Endothelial cell of umbilical vein (primary cell): ENCODE measurements at regions of chr3 and their contacts with region 1.

Region 1: GRCh38 chr3:32467333-32468070 is 35.1 kb downstream of the CMTM6 start:
- DNase-seq: peak; percentile 89
- H3K4me3 ChIP-seq: peak overlapping the region in 1 of 3 experiments; percentile 6
- H3K27ac ChIP-seq: no peak overlapping the region
- H3K4me1 ChIP-seq: peaks cover 37% of the 10 kb centered on the region
- H3K27me3 ChIP-seq: no peaks in the 10 kb centered on the region
- CTCF ChIP-seq: peak; percentile 98 to 99
- POLR2A ChIP-seq: no peak

Region 2: GRCh38 chr3:32177702-32178198 is 289.8 kb before region 1 on chr3:
- CTCF ChIA-PET with region 1: interaction called, 33 read pairs
- POLR2A ChIA-PET with region 1: no interaction called
- dilution Hi-C with region 1: no loop called
- intact Hi-C with region 1: loop called (anchors 1 kb)
- DNase-seq: peak; percentile 91
- H3K4me3 ChIP-seq: no peak overlapping the region
- H3K27ac ChIP-seq: no peak overlapping the region
- H3K4me1 ChIP-seq: peaks cover 6% of the 10 kb centered on the region
- H3K27me3 ChIP-seq: no peaks in the 10 kb centered on the region
- CTCF ChIP-seq: peak; percentile 92 to 95
- POLR2A ChIP-seq: no peak

Region 3: DNA sequence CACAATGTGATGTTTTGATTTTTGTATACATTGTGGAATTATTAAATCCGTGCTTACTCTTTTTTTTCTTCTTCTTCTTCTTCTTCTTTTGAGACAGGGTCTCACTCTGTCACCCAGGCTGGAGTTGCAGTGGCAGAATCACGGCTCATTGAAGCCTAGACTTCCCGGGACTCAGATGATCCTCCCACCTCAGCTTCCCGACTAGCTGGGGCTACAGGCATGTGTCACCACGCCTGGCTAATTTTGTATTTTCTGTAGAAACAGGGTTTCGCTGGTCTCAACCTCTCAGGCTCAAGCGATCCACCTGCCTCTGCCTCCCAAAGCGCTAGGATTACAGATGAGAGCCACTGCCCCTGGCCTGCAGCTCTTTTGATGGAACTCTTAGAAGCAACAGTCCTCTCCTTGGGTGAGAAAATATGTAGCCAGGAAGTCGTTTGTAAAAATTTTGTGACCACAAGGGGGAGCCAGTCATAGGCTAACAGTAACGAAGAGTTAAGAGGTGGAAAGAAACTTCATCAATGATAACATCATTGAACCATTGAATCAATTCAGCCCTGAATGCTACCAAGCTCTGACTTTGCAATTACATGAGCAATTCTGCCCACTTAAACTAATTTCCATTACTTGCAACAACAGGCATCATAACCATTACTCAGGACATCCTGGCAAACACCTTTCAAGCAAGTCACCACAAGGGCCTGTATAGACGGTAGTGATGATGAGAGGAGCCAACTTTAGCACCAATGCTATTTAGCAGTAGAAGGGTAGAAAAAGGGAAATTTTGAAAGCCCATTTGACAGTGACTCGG is 92.5 kb before region 1 on chr3:
- CTCF ChIA-PET with region 1: interaction called, 143 read pairs
- POLR2A ChIA-PET with region 1: no interaction called
- dilution Hi-C with region 1: no loop called
- intact Hi-C with region 1: loop called (anchors 1 kb)
- DNase-seq: peak; percentile 80
- H3K4me3 ChIP-seq: no peak overlapping the region
- H3K27ac ChIP-seq: no peak overlapping the region
- H3K4me1 ChIP-seq: peaks cover 9% of the 10 kb centered on the region
- H3K27me3 ChIP-seq: no peaks in the 10 kb centered on the region
- CTCF ChIP-seq: peak; percentile 41 to 48
- POLR2A ChIP-seq: no peak

Region 4: GRCh38 chr3:32401556-32402081 is 65.9 kb before region 1 on chr3:
- CTCF ChIA-PET with region 1: interaction called, 41 read pairs
- POLR2A ChIA-PET with region 1: no interaction called
- dilution Hi-C with region 1: no loop called
- intact Hi-C with region 1: loop called (anchors 1 kb)
- DNase-seq: peak; percentile 96
- H3K4me3 ChIP-seq: peak overlapping the region in 2 of 3 experiments; percentile 9 to 47
- H3K27ac ChIP-seq: peak overlapping the region; percentile 89
- H3K4me1 ChIP-seq: peaks cover 34% of the 10 kb centered on the region
- H3K27me3 ChIP-seq: no peaks in the 10 kb centered on the region
- CTCF ChIP-seq: no peak
- POLR2A ChIP-seq: peak; percentile 64

Region 5: DNA sequence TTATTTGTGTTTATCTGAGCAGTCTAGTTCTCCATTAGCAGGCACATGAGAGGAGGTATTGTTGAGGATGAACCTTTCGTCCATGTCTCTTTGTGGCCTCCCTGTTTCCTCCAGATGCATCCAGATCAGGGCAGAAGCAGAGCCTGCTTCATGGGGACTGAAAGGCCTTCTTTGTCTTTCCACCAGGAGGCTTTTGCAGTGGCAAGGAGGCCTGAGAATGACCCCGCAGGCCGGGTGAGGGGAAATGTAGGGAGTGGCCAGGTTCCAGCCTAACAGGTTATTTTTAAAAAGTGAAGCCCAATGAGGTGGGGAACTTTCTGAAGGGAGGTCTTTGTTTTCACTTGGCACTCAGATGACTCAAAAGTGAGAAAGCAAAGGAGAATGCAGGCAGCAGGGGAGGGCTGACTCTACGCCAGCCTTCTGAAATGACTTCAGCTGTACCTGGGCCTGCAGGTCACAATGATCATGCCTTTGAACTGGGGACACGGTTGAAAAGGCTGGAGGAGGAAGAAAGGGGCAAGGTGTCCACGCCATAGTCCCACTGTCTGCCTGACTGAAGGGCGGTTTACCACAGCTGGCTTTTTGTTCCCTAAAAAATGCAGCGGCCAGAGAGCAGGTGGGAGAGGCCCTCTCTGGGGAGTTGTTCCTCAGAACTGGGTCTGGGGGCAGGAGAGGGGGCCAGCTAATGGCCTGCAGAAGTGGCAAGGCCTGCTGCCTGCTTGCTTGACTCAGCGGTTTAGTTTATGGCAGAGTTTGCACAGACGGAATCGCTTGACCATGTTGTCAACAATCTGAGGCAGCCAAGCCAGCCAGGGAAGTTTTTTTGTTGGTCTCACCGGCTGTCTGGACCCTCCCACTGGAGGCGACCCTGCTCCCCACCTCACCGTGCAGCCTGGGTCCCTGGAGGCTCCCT is 47.1 kb before region 1 on chr3:
- CTCF ChIA-PET with region 1: interaction called, 56 read pairs
- POLR2A ChIA-PET with region 1: no interaction called
- dilution Hi-C with region 1: no loop called
- intact Hi-C with region 1: loop called (anchors 1 kb)
- DNase-seq: peak; percentile 85
- H3K4me3 ChIP-seq: no peak overlapping the region
- H3K27ac ChIP-seq: peak overlapping the region; percentile 92
- H3K4me1 ChIP-seq: peaks cover 57% of the 10 kb centered on the region
- H3K27me3 ChIP-seq: no peaks in the 10 kb centered on the region
- CTCF ChIP-seq: peak; percentile 22 to 25
- POLR2A ChIP-seq: peak; percentile 11

Region 6: DNA sequence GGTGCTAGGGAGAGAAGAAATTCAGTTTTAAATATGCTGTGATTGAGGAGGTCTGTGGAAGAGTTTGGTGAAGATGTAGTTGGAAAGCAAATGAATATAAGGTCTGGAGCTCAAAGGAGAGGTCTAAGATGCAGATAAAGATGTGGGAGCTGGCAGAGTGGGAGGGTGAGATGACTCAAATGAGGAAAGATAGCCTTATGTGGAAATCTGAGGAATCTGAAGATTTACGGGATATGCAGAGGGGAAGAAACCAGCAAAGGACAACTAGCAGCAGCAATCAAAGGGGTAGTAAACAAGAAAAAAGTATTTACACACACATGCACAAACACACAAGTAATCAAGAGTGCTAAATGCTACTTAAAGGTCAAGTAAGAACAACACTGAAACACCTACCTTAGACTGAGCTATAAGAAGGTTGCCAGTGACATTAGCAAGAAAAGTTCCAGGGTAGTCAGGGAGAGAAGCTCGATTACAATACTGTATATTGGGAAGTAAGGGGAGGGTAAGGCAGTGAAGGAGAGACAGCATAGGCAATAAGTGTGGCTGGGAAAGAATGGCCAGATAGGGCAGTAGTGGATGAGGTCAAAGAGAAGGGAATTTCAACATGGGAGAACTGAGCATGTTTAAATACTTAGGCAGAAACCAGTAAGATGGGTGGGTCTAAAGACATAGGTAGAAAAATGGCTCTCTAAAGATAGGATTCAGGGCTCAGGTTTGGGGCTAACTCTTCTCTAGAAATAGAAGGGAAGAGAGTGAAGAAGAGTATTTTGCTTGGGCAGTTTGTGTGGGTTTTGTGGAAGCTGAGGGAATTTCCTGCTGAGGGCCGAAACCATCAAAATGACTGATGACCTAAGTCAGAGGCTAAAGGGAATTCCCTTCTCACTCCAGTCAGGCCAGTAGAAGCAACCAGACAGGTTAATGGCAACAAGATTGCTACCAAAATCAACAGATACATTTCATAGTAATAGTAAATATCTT is 26.2 kb after region 1 on chr3:
- CTCF ChIA-PET with region 1: interaction called, 10 read pairs
- POLR2A ChIA-PET with region 1: no interaction called
- dilution Hi-C with region 1: no loop called
- intact Hi-C with region 1: no loop called
- DNase-seq: peak; percentile 56
- H3K4me3 ChIP-seq: no peak overlapping the region
- H3K27ac ChIP-seq: no peak overlapping the region
- H3K4me1 ChIP-seq: peaks cover 12% of the 10 kb centered on the region
- H3K27me3 ChIP-seq: no peaks in the 10 kb centered on the region
- CTCF ChIP-seq: no peak
- POLR2A ChIP-seq: no peak

Region 7: DNA sequence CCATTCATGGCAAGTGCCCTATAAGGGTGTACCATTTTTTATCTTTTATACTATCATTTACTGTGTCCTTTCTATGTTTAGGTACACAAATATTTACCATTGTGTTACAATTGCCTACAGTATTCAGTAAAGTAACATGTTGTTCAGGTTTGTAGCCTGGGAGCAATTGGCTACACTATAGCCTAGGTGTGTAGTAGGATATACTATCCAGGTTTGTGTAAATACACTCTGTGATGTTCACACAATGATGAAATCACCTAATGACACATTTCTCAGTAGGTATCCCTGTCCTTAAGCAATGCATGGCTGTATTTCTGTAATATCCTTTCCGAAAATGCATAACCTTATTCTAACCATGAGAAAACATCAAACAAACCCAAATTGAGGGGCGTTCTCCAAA is 199.6 kb after region 1 on chr3:
- CTCF ChIA-PET with region 1: interaction called, 4 read pairs
- POLR2A ChIA-PET with region 1: no interaction called
- dilution Hi-C with region 1: no loop called
- intact Hi-C with region 1: loop called (anchors 1 kb)
- DNase-seq: no peak
- H3K4me3 ChIP-seq: no peak overlapping the region
- H3K27ac ChIP-seq: no peak overlapping the region
- H3K4me1 ChIP-seq: no peaks in the 10 kb centered on the region
- H3K27me3 ChIP-seq: peaks cover 7 to 10% of the 10 kb centered on the region in 2 experiments
- CTCF ChIP-seq: no peak
- POLR2A ChIP-seq: no peak